Posterior vena cava (tissue), 2 donors: ENCODE measurements at regions of chr4 and their contacts with region 1.

Region 1: GRCh38 chr4:84691170-84691691 is 108.3 kb downstream of the CDS1 start:
- DNase-seq: no peak

Region 2: GRCh38 chr4:84622959-84623358 is 68.3 kb before region 1 on chr4:
- intact Hi-C with region 1: loop called in 1 of 2 experiments (anchors 2 kb)
- DNase-seq: no peak